ENCODE measurements at regions of chr6 and their contacts with region 1.

Region 1: GRCh38 chr6:164439331-164439730 is 870.1 kb downstream of the C6orf118 start:
- DNase-seq: no peak
- ATAC-seq: no peak
- H3K4me3 ChIP-seq: no peak overlapping the region
- H3K27ac ChIP-seq: no peak overlapping the region
- H3K4me1 ChIP-seq: no peaks in the 10 kb centered on the region
- H3K27me3 ChIP-seq: no peaks in the 10 kb centered on the region
- CTCF ChIP-seq: no peak

Region 2: GRCh38 chr6:164303102-164303964 is 136.0 kb before region 1 on chr6:
- intact Hi-C with region 1: loop called in 1 of 3 experiments (anchors 10 kb)
- DNase-seq: peak in 1 of 6 donors; percentile 5
- ATAC-seq: peak in 3 of 4 donors; percentile 22 to 59 (median 53)
- H3K4me3 ChIP-seq: no peak overlapping the region
- H3K27ac ChIP-seq: no peak overlapping the region
- H3K4me1 ChIP-seq: no peaks in the 10 kb centered on the region
- H3K27me3 ChIP-seq: no peaks in the 10 kb centered on the region
- CTCF ChIP-seq: no peak

Region 3: DNA sequence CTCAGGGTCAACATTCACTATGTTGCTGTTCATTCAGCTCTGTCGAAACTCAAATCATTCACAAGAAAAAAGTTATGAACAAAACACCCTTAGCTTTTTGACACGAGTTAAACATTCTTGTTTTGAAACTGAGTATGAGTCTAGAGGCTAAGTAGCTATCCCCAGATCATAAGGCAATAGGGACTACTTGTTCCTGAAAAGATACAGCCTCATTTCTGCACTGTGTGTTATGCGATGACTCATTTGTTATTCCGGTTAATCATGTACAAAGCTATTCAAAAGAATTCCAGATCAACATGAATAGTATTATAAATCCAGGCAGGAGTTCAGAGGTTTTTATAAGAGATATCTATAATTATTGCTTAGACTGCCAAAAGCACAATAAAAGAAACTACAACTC is 116.8 kb before region 1 on chr6:
- intact Hi-C with region 1: no loop called
- DNase-seq: no peak
- ATAC-seq: peak; percentile 70 to 91 (median 90)
- H3K4me3 ChIP-seq: no peak overlapping the region
- H3K27ac ChIP-seq: peak overlapping the region in 2 of 4 donors; percentile 30 to 55
- H3K4me1 ChIP-seq: no peaks in the 10 kb centered on the region
- H3K27me3 ChIP-seq: no peaks in the 10 kb centered on the region
- CTCF ChIP-seq: no peak

Measured in pancreas (tissue), 10 donors.